ENCODE measurements at regions of chr12 and their contacts with region 1.

Region 1: GRCh38 chr12:94571556-94571955 is 78.8 kb downstream of the TMCC3 start:
- DNase-seq: peak; percentile 74 to 77
- H3K4me3 ChIP-seq: no peak overlapping the region
- H3K27ac ChIP-seq: peak overlapping the region; percentile 72
- H3K4me1 ChIP-seq: peaks cover 36% of the 10 kb centered on the region
- H3K27me3 ChIP-seq: no peaks in the 10 kb centered on the region
- CTCF ChIP-seq: no peak

Region 2: GRCh38 chr12:94289461-94290312 is 281.9 kb before region 1 on chr12:
- CTCF ChIA-PET with region 1: no interaction called
- POLR2A ChIA-PET with region 1: no interaction called
- intact Hi-C with region 1: no loop called
- DNase-seq: no peak
- H3K4me3 ChIP-seq: no peak overlapping the region
- H3K27ac ChIP-seq: no peak overlapping the region
- H3K4me1 ChIP-seq: no peaks in the 10 kb centered on the region
- H3K27me3 ChIP-seq: no peaks in the 10 kb centered on the region
- CTCF ChIP-seq: no peak

Region 3: GRCh38 chr12:94445662-94446061 is 125.9 kb before region 1 on chr12:
- CTCF ChIA-PET with region 1: no interaction called
- POLR2A ChIA-PET with region 1: no interaction called
- intact Hi-C with region 1: no loop called
- DNase-seq: no peak
- H3K4me3 ChIP-seq: no peak overlapping the region
- H3K27ac ChIP-seq: no peak overlapping the region
- H3K4me1 ChIP-seq: no peaks in the 10 kb centered on the region
- H3K27me3 ChIP-seq: no peaks in the 10 kb centered on the region
- CTCF ChIP-seq: no peak

Region 4: GRCh38 chr12:94586589-94587259 is 15.2 kb after region 1 on chr12:
- CTCF ChIA-PET with region 1: no interaction called
- POLR2A ChIA-PET with region 1: interaction called, 14 read pairs
- intact Hi-C with region 1: no loop called
- DNase-seq: peak in 1 of 2 experiments; percentile 52
- H3K4me3 ChIP-seq: no peak overlapping the region
- H3K27ac ChIP-seq: peak overlapping the region; percentile 10; the same call in 1 of the 2 replicates
- H3K4me1 ChIP-seq: peaks cover 35% of the 10 kb centered on the region
- H3K27me3 ChIP-seq: no peaks in the 10 kb centered on the region
- CTCF ChIP-seq: no peak